ENCODE measurements at regions of chr9 and their contacts with region 1.

Region 1: GRCh38 chr9:14941501-14942405 is 31.5 kb upstream of the FREM1 start:
- DNase-seq: no peak
- ATAC-seq: peak; percentile 57 to 75 (median 64)
- H3K4me3 ChIP-seq: peak overlapping the region in 1 of 12 donors; percentile 5
- H3K27ac ChIP-seq: peak overlapping the region in 8 of 12 donors; percentile 19 to 72 (median 49)
- H3K4me1 ChIP-seq: no peaks in the 10 kb centered on the region
- H3K27me3 ChIP-seq: no peaks in the 10 kb centered on the region
- CTCF ChIP-seq: no peak
- POLR2A ChIP-seq: no peak

Region 2: GRCh38 chr9:14909961-14910805 is 31.6 kb before region 1 on chr9 and contains the start of gene FREM1:
- intact Hi-C with region 1: loop called in 1 of 10 experiments (anchors 5 kb)
- DNase-seq: peak in 4 of 5 donors; percentile 12 to 62 (median 41)
- ATAC-seq: peak; percentile 45 to 70 (median 54)
- H3K4me3 ChIP-seq: peak within 1 kb of the TSS in 10 of 12 donors; percentile 21 to 56 (median 44)
- H3K27ac ChIP-seq: peak within 1 kb of the TSS in 9 of 12 donors; percentile 10 to 76 (median 55)
- H3K4me1 ChIP-seq: peaks cover 0 to 24% (median 2%) of the 10 kb centered on the region in 12 donors
- H3K27me3 ChIP-seq: no peaks in the 10 kb centered on the region
- CTCF ChIP-seq: no peak
- POLR2A ChIP-seq: no peak
- total RNA-seq, gene FREM1: 0.62 to 6.5 (median 2.5) TPM

Measured in heart left ventricle (tissue), 16 donors.